ENCODE measurements at regions of chr5 and their contacts with region 1.

Region 1: GRCh38 chr5:126656396-126657007 is 55.8 kb downstream of the PHAX start:
- DNase-seq: peak; percentile 37 to 64 (median 42)
- ATAC-seq: peak; percentile 52; the same call in 1 of the 3 replicates
- H3K4me3 ChIP-seq: no peak overlapping the region
- H3K27ac ChIP-seq: no peak overlapping the region
- H3K4me1 ChIP-seq: no peaks in the 10 kb centered on the region
- H3K27me3 ChIP-seq: no peaks in the 10 kb centered on the region
- CTCF ChIP-seq: peak; percentile 70 to 96 (median 81); a peak in 5 of 6 replicates
- EP300 ChIP-seq: no peak
- POLR2A ChIP-seq: no peak
- RAD21 ChIP-seq: peak; percentile 95

Region 2: GRCh38 chr5:126525630-126526245 is 130.8 kb before region 1 on chr5:
- CTCF ChIA-PET with region 1: no interaction called
- POLR2A ChIA-PET with region 1: no interaction called
- in situ Hi-C with region 1: no loop called
- intact Hi-C with region 1: no loop called
- DNase-seq: peak in 1 of 4 experiments; percentile 77
- ATAC-seq: peak; percentile 87
- H3K4me3 ChIP-seq: no peak overlapping the region
- H3K27ac ChIP-seq: peak overlapping the region; percentile 62
- H3K4me1 ChIP-seq: peaks cover 5 to 11% of the 10 kb centered on the region in 2 experiments; a peak in 4 of 5 replicates
- H3K27me3 ChIP-seq: no peaks in the 10 kb centered on the region
- CTCF ChIP-seq: no peak
- EP300 ChIP-seq: no peak
- POLR2A ChIP-seq: peak; percentile 51; the same call in 1 of the 2 replicates
- RAD21 ChIP-seq: no peak

Region 3: GRCh38 chr5:126776497-126777256 is 120.2 kb after region 1 on chr5 and contains the start of gene LMNB1:
- CTCF ChIA-PET with region 1: interaction called, 33 read pairs
- POLR2A ChIA-PET with region 1: interaction called, 6 read pairs
- in situ Hi-C with region 1: no loop called
- intact Hi-C with region 1: no loop called
- DNase-seq: peak; percentile 94 to 97 (median 94)
- ATAC-seq: peak; percentile 83
- H3K4me3 ChIP-seq: peak within 1 kb of the TSS; percentile 93
- H3K27ac ChIP-seq: peak within 1 kb of the TSS; percentile 98
- H3K4me1 ChIP-seq: peaks cover 3 to 19% of the 10 kb centered on the region in 2 experiments; a peak in 4 of 5 replicates
- H3K27me3 ChIP-seq: no peaks in the 10 kb centered on the region
- CTCF ChIP-seq: no peak
- EP300 ChIP-seq: peak; percentile 57
- POLR2A ChIP-seq: peak; percentile 73
- RAD21 ChIP-seq: peak in 1 of 2 experiments; percentile 18; a peak in 3 of 4 replicates
- polyA plus RNA-seq, gene LMNB1: 2.8 to 7.6 TPM

Region 4: DNA sequence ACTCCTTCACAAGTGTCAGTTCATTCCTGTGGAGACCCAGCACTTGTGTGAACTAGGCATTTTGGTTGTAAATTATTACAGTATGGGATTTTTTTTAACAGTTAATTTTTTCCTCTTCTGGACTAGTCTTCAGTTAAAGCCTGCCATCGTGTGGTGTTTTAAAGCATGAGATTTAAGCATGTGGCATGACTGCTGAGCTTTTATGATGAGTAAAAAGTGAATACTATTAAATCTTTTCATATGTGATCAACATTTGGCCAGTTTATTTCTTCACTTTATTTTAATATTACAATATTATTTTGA is 145.4 kb after region 1 on chr5:
- CTCF ChIA-PET with region 1: interaction called, 20 read pairs
- POLR2A ChIA-PET with region 1: no interaction called
- in situ Hi-C with region 1: no loop called
- intact Hi-C with region 1: no loop called
- DNase-seq: no peak
- ATAC-seq: peak; percentile 60
- H3K4me3 ChIP-seq: no peak overlapping the region
- H3K27ac ChIP-seq: no peak overlapping the region
- H3K4me1 ChIP-seq: no peaks in the 10 kb centered on the region; a peak in 3 of 5 replicates
- H3K27me3 ChIP-seq: no peaks in the 10 kb centered on the region
- CTCF ChIP-seq: peak in 2 of 3 experiments; percentile 19 to 42; a peak in 2 of 6 replicates
- EP300 ChIP-seq: no peak
- POLR2A ChIP-seq: no peak
- RAD21 ChIP-seq: peak; percentile 49 to 57

Region 5: GRCh38 chr5:126808521-126808988 is 152.1 kb after region 1 on chr5:
- CTCF ChIA-PET with region 1: interaction called, 8 read pairs
- POLR2A ChIA-PET with region 1: interaction called, 4 read pairs
- in situ Hi-C with region 1: no loop called
- intact Hi-C with region 1: loop called (anchors 1 kb)
- DNase-seq: peak; percentile 22 to 31 (median 25)
- ATAC-seq: peak; percentile 80
- H3K4me3 ChIP-seq: no peak overlapping the region
- H3K27ac ChIP-seq: no peak overlapping the region
- H3K4me1 ChIP-seq: peaks cover 0 to 3% of the 10 kb centered on the region in 2 experiments; a peak in 1 of 5 replicates
- H3K27me3 ChIP-seq: no peaks in the 10 kb centered on the region
- CTCF ChIP-seq: peak; percentile 43 to 70 (median 44); a peak in 5 of 6 replicates
- EP300 ChIP-seq: no peak
- POLR2A ChIP-seq: no peak
- RAD21 ChIP-seq: peak; percentile 37 to 61

Region 6: DNA sequence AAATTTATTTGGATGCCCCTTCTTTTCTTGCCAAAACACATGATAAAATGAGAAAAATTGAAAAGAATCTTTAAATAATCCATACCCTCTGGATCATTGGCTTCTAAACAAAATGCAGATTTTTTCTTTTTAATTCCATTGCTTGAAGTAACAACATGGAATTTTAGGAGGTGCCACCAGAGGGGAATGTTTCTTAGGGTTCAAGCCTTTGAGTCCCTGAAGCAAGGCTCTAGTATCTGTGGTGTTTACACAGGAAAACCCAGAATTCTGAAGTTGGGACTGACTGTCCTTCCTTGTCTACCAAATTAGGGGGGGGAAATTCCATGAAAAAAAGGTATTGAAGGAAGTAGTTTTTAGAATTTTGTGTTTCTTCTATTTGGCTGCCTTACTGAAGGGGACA is 189.8 kb after region 1 on chr5:
- CTCF ChIA-PET with region 1: no interaction called
- POLR2A ChIA-PET with region 1: no interaction called
- in situ Hi-C with region 1: no loop called
- intact Hi-C with region 1: loop called (anchors 5 kb)
- DNase-seq: peak in 1 of 4 experiments; percentile 30
- ATAC-seq: peak; percentile 56
- H3K4me3 ChIP-seq: no peak overlapping the region
- H3K27ac ChIP-seq: no peak overlapping the region
- H3K4me1 ChIP-seq: peaks cover 13 to 31% of the 10 kb centered on the region in 2 experiments; a peak in 4 of 5 replicates
- H3K27me3 ChIP-seq: no peaks in the 10 kb centered on the region
- CTCF ChIP-seq: peak; percentile 29 to 45 (median 38); a peak in 4 of 6 replicates
- EP300 ChIP-seq: no peak
- POLR2A ChIP-seq: no peak
- RAD21 ChIP-seq: peak; percentile 43 to 57

Region 7: DNA sequence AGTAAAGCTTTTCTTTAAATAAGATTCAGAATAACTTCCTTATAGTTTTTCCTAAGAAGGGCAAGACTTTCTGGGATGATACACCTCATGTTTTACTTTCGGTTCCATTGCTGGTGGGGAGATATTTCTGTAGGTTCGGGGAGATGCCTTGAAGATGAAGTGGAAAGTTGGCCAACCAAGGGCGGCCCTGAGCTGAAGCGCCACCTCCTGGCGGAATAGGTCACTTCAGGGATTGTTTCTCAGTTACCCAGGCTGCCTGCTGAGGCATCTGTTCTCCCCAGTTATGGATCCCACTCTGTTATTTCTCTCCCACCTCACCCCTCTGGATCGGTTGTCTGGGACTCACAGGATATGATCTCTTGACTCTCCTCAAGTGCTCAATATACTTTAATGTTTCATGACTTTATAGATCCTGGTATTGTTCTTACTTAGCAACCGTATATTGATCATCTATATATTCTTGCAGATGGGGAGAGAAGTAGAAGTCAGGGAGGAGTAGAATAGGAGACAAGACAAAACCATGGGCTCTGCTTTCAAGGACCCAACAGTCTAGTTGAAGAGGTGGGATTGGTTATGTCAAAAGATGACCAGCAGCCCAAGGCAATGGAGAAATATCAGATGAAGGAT is 657.5 kb after region 1 on chr5:
- CTCF ChIA-PET with region 1: no interaction called
- POLR2A ChIA-PET with region 1: no interaction called
- in situ Hi-C with region 1: no loop called
- intact Hi-C with region 1: loop called (anchors 1 kb)
- DNase-seq: peak; percentile 70 to 72 (median 71)
- ATAC-seq: peak; percentile 96
- H3K4me3 ChIP-seq: no peak overlapping the region
- H3K27ac ChIP-seq: no peak overlapping the region
- H3K4me1 ChIP-seq: no peaks in the 10 kb centered on the region
- H3K27me3 ChIP-seq: 0 out of 5 replicates have a peak, but pooled peaks cover 0 to 4% of the 10 kb centered on the region in 2 experiments
- CTCF ChIP-seq: peak; percentile 78 to 88 (median 79)
- EP300 ChIP-seq: no peak
- POLR2A ChIP-seq: no peak
- RAD21 ChIP-seq: peak; percentile 65 to 75

Region 8: DNA sequence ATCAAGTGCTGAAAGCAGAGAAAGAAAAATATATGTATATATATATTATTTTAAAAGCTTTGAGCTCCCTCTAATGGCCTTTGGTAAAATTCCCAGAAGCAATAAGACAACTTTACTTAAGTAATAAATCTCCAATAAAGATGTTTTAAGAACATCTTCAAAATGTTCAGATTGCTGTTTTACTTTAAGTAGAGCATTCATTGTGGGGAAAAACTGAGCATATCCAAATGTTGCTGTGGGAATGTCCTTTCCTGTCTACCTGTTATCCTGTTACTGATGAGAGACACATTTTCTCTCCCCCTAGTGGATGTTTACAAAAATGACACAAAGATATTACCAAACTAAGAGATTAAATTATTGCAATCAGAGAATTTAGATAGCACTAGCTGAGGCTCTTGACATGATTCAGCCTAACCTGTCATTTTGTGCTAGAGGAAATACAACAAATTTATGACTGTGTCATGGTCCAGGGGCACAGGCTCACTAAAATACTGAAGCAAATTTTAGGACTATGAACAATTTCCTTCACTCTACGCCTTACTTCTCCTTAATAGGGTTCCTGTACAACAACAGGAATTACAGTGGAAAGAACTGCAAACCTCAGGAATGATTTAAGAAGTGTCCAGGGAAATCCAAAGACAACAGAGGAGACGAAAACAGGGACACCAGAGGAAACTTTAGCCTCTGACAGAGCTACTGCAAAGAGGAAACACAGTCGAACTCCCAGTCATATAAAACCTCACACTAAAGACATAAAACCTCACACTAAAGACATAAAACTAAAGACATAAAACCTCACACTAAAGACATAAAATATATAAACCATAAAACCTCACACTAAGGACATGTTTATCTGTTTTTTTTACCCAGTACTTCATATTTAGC is 836.6 kb after region 1 on chr5:
- CTCF ChIA-PET with region 1: interaction called, 4 read pairs
- POLR2A ChIA-PET with region 1: no interaction called
- in situ Hi-C with region 1: no loop called
- intact Hi-C with region 1: loop called (anchors 5 kb)
- DNase-seq: peak; percentile 38 to 45 (median 43)
- ATAC-seq: peak; percentile 78
- H3K4me3 ChIP-seq: no peak overlapping the region
- H3K27ac ChIP-seq: no peak overlapping the region
- H3K4me1 ChIP-seq: no peaks in the 10 kb centered on the region; a peak in 1 of 5 replicates
- H3K27me3 ChIP-seq: no peaks in the 10 kb centered on the region
- CTCF ChIP-seq: peak; percentile 79 to 89 (median 80)
- EP300 ChIP-seq: no peak
- POLR2A ChIP-seq: no peak
- RAD21 ChIP-seq: peak; percentile 65 to 67